ENCODE measurements at regions of chr12 and their contacts with region 1.

Region 1: GRCh38 chr12:57983146-57983857 is 41.9 kb downstream of the ATP23 start:
- DNase-seq: peak in 1 of 3 donors; percentile 45
- ATAC-seq: no peak
- H3K4me3 ChIP-seq: no peak overlapping the region
- H3K27ac ChIP-seq: no peak overlapping the region
- H3K4me1 ChIP-seq: no peaks in the 10 kb centered on the region
- H3K27me3 ChIP-seq: no peaks in the 10 kb centered on the region

Region 2: DNA sequence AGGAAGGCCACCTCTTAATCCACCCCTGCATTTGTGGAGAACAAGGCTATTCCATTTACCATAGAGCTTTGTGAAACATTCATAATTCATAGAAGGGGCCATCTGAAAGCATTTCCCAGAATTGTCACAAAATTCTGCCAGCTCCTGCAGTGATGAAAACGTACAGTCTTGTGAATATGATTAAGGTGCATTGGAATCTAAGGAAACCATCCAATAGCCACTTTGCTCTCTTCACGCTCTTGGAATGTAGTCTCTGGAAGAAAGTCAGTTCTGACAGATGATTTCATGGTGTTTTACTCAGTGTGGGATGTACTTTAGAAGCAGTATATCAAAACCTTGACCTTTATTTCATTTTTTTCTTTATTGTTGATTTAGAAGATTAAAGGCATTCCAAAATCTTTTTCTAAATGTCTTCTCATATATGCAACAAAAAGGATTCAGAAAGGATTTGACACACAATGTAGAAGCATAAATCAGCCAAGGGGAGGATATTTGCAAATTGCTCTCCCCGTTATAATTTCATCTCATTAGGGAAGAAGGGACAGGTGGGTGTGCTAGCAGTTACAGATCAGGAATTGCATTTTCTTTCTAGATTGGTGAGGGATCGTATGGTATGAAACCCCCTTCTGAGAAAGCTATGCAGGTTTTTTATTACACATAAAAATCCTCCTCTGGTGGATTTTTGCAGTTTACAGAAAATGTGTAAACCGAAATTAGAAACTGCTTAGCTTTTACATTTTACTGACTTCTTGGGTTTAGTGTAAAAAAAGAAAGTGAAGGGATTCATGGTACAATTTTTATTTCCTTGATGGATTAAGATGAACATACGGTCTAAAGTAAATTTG is 546.8 kb after region 1 on chr12:
- intact Hi-C with region 1: loop called in 1 of 4 experiments (anchors 10 kb)
- DNase-seq: no peak
- ATAC-seq: peak in 1 of 2 donors; percentile 23
- H3K4me3 ChIP-seq: no peak overlapping the region
- H3K27ac ChIP-seq: no peak overlapping the region
- H3K4me1 ChIP-seq: no peaks in the 10 kb centered on the region
- H3K27me3 ChIP-seq: no peaks in the 10 kb centered on the region

Measured in right cardiac atrium (tissue), 5 donors.